AG04449 (cell line): ENCODE measurements at regions of chr21 and their contacts with region 1.

Region 1: DNA sequence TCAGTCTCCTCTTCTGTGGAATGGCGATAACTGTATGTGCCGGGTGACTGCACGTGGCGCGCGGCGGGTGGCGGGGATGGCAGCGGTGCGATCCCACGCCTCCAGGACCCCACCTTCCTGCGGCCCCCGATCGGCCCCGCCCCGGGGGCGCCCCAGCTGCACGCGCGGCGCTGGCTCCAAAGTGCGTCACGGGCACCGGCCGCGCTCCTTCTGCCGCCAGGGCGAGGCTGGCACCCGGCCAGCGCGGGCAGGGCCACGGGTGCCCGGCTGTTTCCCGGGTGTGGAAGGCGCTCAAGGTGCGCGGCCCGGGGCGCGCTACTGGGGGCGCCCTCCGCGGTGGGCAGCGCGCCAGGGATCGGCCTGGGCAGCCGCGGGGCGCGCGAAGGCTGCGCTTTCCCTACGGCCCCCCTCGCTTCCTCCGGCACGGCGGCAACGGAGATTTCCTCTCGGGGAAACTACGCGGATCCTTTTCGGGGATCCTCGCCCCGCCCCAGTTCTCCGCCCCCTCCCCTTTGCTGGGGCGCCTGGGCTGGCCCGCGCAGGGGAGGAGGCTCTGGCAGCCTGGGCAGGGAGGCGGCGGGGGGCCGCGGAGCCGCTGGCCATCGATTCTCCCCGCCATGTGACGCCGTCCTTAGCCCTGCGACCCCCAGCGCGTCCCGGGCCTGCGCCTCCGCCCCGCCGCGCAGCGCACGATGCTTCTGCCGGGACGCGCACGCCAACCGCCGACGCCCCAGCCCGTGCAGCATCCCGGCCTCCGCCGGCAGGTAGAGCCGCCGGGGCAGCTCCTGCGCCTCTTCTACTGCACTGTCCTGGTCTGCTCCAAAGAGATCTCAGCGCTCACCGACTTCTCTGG is at the start of gene EVA1C:
- DNase-seq: no peak
- H3K4me3 ChIP-seq: peak within 1 kb of the TSS; percentile 56
- CTCF ChIP-seq: no peak

Region 2: GRCh38 chr21:32173121-32173724 is 239.2 kb before region 1 on chr21:
- CTCF ChIA-PET with region 1: no interaction called
- POLR2A ChIA-PET with region 1: no interaction called
- DNase-seq: no peak
- H3K4me3 ChIP-seq: no peak overlapping the region
- CTCF ChIP-seq: no peak

Region 3: GRCh38 chr21:32423320-32424190 is 11.2 kb after region 1 on chr21:
- CTCF ChIA-PET with region 1: interaction called, 12 read pairs
- POLR2A ChIA-PET with region 1: no interaction called
- DNase-seq: peak; percentile 79
- H3K4me3 ChIP-seq: no peak overlapping the region
- CTCF ChIP-seq: no peak

Region 4: DNA sequence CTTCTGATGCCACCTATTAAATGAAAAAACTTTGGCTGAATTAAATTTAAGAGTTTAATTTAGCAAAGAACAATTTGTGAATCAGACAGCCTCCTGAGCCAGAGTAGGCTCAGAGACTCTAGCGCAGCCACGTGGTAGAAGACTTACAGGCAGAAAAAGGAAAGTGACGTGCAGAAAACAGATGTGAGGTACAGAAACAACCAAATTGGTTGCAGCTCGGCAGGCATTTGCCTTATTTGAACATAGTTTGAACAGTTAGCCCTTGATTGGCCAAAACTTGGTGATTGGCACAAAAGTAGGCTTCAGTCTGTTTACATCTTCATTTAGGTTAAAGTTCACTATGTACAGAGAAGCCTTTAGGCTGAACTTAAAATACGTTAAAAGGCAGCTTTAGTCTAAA is 150.0 kb after region 1 on chr21:
- CTCF ChIA-PET with region 1: interaction called, 218 read pairs
- POLR2A ChIA-PET with region 1: no interaction called
- DNase-seq: peak; percentile 50
- H3K4me3 ChIP-seq: no peak overlapping the region
- CTCF ChIP-seq: peak; percentile 48